Breast epithelium (tissue), 4 donors: ENCODE measurements at regions of chr18 and their contacts with region 1.

Region 1: GRCh38 chr18:5538544-5538943 is 5.3 kb downstream of the EPB41L3 start:
- DNase-seq: no peak
- H3K4me3 ChIP-seq: no peak overlapping the region
- H3K27ac ChIP-seq: no peak overlapping the region
- H3K4me1 ChIP-seq: no peaks in the 10 kb centered on the region
- H3K27me3 ChIP-seq: peaks cover 0 to 11% of the 10 kb centered on the region in 2 donors
- CTCF ChIP-seq: no peak
- POLR2A ChIP-seq: no peak

Region 2: DNA sequence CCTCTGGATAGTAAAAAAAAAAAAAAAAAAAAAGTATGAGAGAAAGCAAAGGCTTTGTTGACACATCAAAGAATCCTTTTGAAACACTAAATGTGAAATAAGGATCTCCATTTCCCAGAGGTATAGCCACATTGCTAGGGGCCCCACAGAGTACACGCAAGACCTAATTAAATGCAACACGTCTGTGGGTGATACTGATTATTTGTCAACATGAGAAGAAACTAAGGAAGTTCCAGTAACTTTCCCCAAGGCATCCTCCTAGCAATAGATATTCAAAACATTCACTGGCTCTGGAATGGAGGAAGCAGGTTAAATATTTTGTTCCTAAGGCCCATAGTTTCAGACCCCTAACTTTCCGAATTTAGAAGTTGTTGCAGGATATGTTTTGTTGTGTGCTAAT is 29.9 kb after region 1 on chr18:
- intact Hi-C with region 1: loop called (anchors 1 kb)
- DNase-seq: no peak
- H3K4me3 ChIP-seq: no peak overlapping the region
- H3K27ac ChIP-seq: no peak overlapping the region
- H3K4me1 ChIP-seq: no peaks in the 10 kb centered on the region
- H3K27me3 ChIP-seq: no peaks in the 10 kb centered on the region
- CTCF ChIP-seq: no peak
- POLR2A ChIP-seq: no peak

Region 3: GRCh38 chr18:5582849-5583681 is 44.5 kb after region 1 on chr18:
- intact Hi-C with region 1: no loop called
- DNase-seq: no peak
- H3K4me3 ChIP-seq: no peak overlapping the region
- H3K27ac ChIP-seq: peak overlapping the region in 1 of 2 donors; percentile 34
- H3K4me1 ChIP-seq: no peaks in the 10 kb centered on the region
- H3K27me3 ChIP-seq: no peaks in the 10 kb centered on the region
- CTCF ChIP-seq: no peak
- POLR2A ChIP-seq: no peak